PC-9 (cell line): ENCODE measurements at regions of chr5 and their contacts with region 1.

Region 1: DNA sequence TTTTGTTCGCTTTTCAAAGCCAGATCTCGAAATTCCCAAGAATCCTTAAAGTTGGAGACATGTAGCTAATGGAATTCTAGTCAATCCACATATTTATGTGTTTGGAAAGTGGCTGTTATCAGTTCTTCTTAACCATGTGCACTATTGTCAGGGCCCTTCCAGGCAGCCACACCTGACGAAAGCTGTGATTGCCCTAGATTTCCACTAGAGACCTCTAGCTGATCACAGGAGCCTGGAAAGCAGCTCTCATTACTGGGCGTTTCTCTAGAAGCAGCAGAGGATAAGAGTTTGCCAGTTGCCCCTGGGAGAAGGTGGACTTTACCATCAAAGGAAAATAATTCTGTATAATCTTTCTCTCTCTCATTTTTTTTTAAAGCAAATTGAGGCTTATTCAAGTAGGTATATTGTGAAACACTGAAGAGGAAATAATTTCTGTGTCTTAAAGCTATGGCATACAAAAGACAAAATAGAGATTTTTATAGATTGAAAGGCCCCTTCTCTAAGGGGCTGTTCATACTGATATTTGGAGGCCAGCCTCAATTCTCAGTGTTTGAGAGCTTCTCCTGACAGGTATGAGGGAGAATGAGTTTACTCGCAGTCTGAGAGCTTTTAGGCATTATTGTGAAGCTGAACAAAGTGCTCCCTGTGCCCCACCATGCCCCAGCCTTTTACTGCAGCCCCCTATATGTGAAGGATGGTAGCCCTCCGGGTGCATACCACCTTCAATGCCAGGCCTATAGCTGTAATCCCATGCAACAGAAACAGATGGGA is 405.4 kb upstream of the ACTBL2 start:
- DNase-seq: peak; percentile 58 to 64
- H3K4me3 ChIP-seq: no peak overlapping the region
- H3K27ac ChIP-seq: peak overlapping the region; percentile 48
- H3K4me1 ChIP-seq: peaks cover 18% of the 10 kb centered on the region
- H3K27me3 ChIP-seq: no peaks in the 10 kb centered on the region
- CTCF ChIP-seq: peak; percentile 58

Region 2: DNA sequence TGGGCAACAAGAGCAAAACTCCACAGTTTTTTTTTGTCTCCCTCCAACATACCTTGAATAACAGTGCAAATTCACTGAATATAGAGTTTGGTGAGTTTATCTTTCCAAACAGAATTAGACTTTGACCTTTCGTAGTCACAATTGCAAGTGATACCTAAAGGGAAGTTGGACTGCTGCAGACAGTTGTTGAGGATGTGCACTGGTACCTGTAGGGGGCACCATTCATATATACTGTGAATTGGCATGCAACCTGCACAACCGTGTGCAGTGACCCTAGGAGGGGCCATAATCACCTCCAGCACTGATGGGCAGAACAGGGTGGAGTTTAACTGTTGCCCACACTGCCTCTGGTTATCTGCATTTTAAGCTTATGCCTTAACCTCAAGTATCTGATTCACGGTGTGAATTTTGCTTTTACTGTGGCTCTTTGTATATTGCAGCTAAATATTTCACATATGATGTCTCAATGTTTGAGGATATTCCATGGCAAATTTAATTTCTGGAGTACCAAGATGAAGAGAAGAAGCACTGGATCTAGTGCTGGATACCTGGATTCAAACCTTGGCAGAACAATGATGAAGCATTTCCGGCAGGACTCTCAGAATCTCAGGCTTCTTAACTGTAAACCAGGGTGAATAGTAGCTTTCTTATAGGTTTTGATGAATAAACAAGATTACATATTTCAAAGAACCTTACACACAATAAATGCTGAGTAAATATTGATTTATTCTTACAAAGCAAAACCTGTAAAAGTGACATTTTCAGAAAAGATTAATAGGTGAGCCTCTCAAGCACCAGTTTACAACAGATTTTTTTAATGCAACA is 549.8 kb before region 1 on chr5:
- CTCF ChIA-PET with region 1: no interaction called
- POLR2A ChIA-PET with region 1: interaction called, 4 read pairs
- intact Hi-C with region 1: loop called (anchors 2 kb)
- DNase-seq: peak; percentile 31 to 72
- H3K4me3 ChIP-seq: no peak overlapping the region
- H3K27ac ChIP-seq: peak overlapping the region; percentile 67
- H3K4me1 ChIP-seq: peaks cover 37% of the 10 kb centered on the region
- H3K27me3 ChIP-seq: no peaks in the 10 kb centered on the region
- CTCF ChIP-seq: peak; percentile 50

Region 3: DNA sequence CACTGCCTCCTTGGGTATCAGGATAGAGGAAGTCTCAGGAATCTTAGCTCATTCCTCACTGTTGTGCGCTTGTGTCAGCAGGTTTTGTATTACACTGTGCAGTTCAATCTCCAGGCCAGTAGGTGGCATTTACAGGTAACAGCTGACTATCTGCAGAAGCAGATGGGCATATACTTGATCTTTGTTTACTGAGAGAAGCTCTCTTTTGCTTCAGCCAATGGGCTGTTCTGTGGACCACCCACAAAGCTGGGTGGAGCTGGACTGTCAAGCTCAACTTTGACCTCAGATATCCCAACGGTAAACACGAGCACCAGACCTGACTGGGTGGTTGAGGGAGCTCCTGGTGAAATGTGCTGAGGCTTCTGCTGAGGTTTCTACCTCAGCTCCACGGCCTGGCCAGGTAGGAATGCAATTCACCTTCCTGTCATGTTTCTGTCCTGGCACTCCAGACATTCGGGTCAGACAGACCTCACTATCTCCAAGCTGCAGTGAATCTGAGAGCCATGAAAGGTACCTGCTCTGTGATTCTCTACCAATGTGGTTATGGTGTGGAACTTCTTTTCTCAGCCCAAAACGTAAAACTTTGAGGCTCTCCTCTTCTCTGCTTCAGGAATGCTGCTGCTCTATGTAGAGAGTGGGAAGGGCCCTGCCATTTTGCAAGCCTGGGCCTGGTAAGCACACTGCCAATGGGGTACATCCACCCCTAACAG is 237.5 kb before region 1 on chr5:
- CTCF ChIA-PET with region 1: interaction called, 6 read pairs
- POLR2A ChIA-PET with region 1: no interaction called
- intact Hi-C with region 1: loop called (anchors 1 kb)
- DNase-seq: peak in 1 of 2 experiments; percentile 70
- H3K4me3 ChIP-seq: no peak overlapping the region
- H3K27ac ChIP-seq: no peak overlapping the region
- H3K4me1 ChIP-seq: no peaks in the 10 kb centered on the region
- H3K27me3 ChIP-seq: no peaks in the 10 kb centered on the region
- CTCF ChIP-seq: peak; percentile 59

Region 4: DNA sequence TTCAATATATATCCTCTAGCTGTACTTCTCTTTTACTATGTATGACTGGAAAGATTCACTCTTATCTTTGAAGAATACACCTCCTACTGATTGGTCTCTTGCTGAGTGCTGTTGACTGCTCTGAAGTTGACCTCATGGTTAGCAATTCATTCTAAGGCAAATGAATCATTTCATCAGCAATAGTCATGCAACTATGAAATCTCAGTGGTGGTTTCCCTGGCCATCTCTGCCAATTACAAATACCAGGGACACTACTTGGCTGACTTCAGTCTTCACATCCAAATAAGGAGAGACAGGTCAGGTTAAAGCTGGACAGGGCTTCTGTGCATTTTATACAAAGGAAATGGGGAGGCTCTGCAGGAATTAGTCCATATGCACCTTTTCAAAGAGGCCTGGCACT is 71.9 kb before region 1 on chr5:
- CTCF ChIA-PET with region 1: no interaction called
- POLR2A ChIA-PET with region 1: no interaction called
- intact Hi-C with region 1: loop called (anchors 2 kb)
- DNase-seq: peak; percentile 51 to 81
- H3K4me3 ChIP-seq: no peak overlapping the region
- H3K27ac ChIP-seq: peak overlapping the region; percentile 73
- H3K4me1 ChIP-seq: peaks cover 22% of the 10 kb centered on the region
- H3K27me3 ChIP-seq: no peaks in the 10 kb centered on the region
- CTCF ChIP-seq: no peak

Region 5: GRCh38 chr5:57862457-57862911 is 25.6 kb before region 1 on chr5:
- CTCF ChIA-PET with region 1: no interaction called
- POLR2A ChIA-PET with region 1: no interaction called
- intact Hi-C with region 1: loop called (anchors 1 kb)
- DNase-seq: peak; percentile 69 to 97
- H3K4me3 ChIP-seq: no peak overlapping the region
- H3K27ac ChIP-seq: peak overlapping the region; percentile 99
- H3K4me1 ChIP-seq: peaks cover 31% of the 10 kb centered on the region
- H3K27me3 ChIP-seq: no peaks in the 10 kb centered on the region
- CTCF ChIP-seq: no peak

Region 6: GRCh38 chr5:58259685-58260152 is 371.7 kb after region 1 on chr5:
- CTCF ChIA-PET with region 1: no interaction called
- POLR2A ChIA-PET with region 1: no interaction called
- intact Hi-C with region 1: loop called (anchors 1 kb)
- DNase-seq: peak; percentile 85 to 100
- H3K4me3 ChIP-seq: peak overlapping the region; percentile 44; the same call in 1 of the 2 replicates
- H3K27ac ChIP-seq: peak overlapping the region; percentile 98
- H3K4me1 ChIP-seq: peaks cover 42% of the 10 kb centered on the region
- H3K27me3 ChIP-seq: no peaks in the 10 kb centered on the region
- CTCF ChIP-seq: no peak

Region 7: GRCh38 chr5:59246145-59246869 is 1358.3 kb after region 1 on chr5:
- CTCF ChIA-PET with region 1: no interaction called
- POLR2A ChIA-PET with region 1: no interaction called
- intact Hi-C with region 1: no loop called
- DNase-seq: no peak
- H3K4me3 ChIP-seq: no peak overlapping the region
- H3K27ac ChIP-seq: no peak overlapping the region
- H3K4me1 ChIP-seq: no peaks in the 10 kb centered on the region
- H3K27me3 ChIP-seq: no peaks in the 10 kb centered on the region
- CTCF ChIP-seq: no peak